ENCODE measurements at regions of chr15 and their contacts with region 1.

Region 1: DNA sequence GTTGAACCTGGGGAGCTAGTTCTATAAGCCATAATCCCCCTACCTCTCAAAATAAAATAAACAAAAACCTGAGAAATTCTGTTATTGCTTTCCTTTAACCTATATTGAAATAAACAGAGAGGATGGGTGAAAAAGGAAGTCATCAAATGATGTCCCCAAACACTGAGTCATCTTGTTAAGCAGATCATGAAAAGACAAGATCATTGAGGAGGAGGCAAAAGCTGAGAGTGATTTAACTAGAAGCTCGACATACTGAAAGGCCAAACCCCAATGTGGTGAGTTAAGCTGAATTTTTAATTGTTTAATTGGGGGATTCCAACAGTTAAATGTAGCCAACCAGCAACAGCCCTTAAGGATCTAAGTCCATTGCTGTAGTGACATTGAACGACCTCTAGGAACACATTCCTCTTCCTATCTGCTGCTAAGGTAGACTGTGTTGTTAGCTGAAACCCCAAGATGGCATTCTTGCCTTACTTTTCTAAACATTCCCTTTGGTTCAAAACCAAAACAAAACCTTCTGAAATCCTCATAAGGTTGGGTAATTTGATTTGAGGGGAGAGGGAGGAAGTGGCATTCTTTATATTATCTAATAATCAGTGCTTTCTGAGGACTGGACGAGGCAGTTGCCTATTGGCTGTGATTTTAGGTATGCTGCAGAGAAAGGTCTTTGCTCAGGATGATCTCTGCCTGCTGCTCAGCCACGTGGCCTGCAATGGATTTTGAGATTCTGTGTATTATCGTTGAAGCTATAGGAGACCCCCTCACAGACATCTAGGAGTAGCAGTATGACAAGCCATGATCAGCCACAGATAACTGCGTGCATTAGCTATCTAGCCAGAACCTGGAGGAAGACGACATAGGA is 62.7 kb upstream of the BNIP2 start:
- DNase-seq: no peak
- ATAC-seq: peak; percentile 87
- H3K4me3 ChIP-seq: no peak overlapping the region
- H3K27ac ChIP-seq: no peak overlapping the region
- H3K4me1 ChIP-seq: no peaks in the 10 kb centered on the region
- H3K27me3 ChIP-seq: peaks cover 2% of the 10 kb centered on the region; the same call in 1 of the 2 replicates
- CTCF ChIP-seq: peak; percentile 46; the same call in 1 of the 2 replicates

Region 2: DNA sequence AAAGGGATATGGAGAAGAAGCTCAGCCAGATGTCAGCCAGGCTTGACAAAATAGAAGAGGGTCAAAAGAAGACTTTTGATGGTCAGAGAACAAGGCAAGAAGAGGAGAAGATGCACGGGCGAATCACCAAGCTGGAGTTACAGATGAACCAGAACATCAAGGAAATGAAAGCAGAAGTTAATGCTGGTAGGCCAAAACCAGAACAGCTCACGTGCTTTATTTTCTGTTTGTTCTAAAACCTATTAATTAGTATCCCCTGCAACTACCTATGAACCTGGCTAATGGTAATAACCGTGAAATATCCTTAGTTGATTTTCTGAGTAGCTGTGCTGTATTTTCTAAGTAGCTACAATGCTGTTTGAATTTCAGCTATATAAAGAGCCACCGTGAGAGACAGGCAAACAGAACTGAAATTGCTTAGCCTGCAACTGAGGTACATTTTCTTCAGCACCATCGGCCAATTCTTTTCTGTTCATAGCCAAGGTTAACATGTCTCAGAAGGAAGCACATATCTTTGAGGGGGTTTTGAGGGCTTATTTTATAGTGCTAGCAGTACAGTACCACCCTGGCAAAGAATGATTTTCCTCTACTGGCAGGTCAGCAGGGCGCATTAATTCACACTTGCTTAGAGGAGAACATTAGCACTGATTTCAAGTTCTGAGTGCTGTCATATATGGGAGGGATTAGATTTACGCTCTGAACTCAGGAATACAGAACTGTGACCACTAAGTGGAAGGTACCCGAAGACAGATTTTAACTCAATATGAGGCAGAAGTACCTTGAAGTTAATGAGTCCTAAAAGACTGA is 234.9 kb before region 1 on chr15:
- CTCF ChIA-PET with region 1: no interaction called
- POLR2A ChIA-PET with region 1: no interaction called
- in situ Hi-C with region 1: no loop called
- intact Hi-C with region 1: no loop called
- DNase-seq: no peak
- ATAC-seq: no peak
- H3K4me3 ChIP-seq: no peak overlapping the region
- H3K27ac ChIP-seq: no peak overlapping the region
- H3K4me1 ChIP-seq: no peaks in the 10 kb centered on the region
- H3K27me3 ChIP-seq: no peaks in the 10 kb centered on the region
- CTCF ChIP-seq: no peak

Region 3: DNA sequence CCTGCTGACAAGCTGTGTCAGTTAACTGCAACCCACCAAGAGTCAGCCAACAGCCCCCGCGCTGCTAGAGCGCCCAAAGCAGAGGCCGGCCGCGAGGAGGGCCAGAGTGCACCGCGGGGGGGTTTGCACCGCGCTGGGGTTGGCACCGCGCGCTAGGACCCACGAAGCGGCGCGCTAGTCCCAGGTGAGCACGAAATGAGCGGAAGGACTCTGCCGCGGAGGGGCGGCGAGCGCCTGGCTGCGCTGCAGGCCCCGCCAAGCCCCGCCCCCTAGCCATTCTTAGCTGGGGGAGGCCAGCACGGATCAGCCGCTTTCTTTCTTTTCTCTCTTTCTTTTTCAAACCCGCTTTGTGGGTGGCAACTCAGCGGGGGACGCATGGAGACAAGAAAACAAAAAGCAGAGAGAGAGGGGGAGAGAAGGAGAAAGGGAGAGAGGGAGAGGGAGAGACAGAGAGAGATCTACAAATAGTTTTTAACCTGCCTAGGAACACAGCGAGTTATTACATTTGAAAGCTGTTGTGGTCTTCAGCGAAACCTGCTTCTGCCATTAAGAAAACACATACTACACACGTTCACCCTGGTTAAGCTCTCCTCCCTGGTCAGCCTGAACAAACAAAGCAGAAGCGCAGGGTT is 245.4 kb after region 1 on chr15:
- CTCF ChIA-PET with region 1: no interaction called
- POLR2A ChIA-PET with region 1: no interaction called
- in situ Hi-C with region 1: no loop called
- intact Hi-C with region 1: loop called (anchors 10 kb)
- DNase-seq: no peak
- ATAC-seq: peak; percentile 69
- H3K4me3 ChIP-seq: peak overlapping the region; percentile 35 to 49
- H3K27ac ChIP-seq: no peak overlapping the region
- H3K4me1 ChIP-seq: peaks cover 16% of the 10 kb centered on the region
- H3K27me3 ChIP-seq: peaks cover 61% of the 10 kb centered on the region
- CTCF ChIP-seq: no peak